ENCODE measurements at regions of chr10 and their contacts with region 1.

Region 1: DNA sequence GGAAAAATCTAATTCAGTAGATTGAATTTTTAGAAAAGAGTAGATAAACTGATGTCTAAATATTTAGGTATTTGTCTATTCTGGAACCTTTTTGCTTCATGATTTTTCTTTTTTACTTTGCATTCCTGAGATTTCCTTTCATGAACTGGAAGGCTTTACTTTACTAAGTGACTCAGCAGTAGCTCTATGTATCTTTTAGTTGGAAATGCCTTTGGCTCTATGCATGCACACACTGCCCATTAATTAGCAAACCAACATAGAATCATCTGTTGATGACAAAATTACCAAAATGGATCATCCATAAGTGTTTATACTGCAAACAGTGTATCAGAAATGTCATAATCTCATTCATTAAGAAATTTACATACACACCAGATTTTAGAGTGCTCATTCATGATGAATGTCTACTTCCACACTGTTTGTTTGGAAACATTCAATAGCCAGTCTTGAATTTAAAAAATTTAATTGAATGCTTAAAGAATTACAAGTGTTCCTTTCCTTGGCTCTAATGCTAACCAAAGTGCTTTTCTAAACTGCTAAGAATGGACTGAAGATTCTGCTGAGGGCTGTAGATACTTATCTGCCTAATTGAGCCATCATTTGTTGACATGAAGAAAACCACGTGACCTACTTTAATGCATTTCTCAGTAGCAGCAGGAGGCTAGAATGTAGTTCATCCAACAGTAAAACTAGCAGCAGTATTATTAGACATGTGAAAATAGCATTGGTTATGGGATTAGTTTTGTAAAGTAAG is 282.0 kb downstream of the ADK start:
- DNase-seq: no peak
- ATAC-seq: no peak
- H3K4me3 Mint-ChIP-seq: no peak overlapping the region
- H3K27ac Mint-ChIP-seq: peak overlapping the region; percentile 51; the same call in 1 of the 2 replicates
- H3K4me1 Mint-ChIP-seq: peaks cover 32% of the 10 kb centered on the region
- H3K27me3 Mint-ChIP-seq: no peaks in the 10 kb centered on the region
- CTCF ChIP-seq: no peak

Region 2: DNA sequence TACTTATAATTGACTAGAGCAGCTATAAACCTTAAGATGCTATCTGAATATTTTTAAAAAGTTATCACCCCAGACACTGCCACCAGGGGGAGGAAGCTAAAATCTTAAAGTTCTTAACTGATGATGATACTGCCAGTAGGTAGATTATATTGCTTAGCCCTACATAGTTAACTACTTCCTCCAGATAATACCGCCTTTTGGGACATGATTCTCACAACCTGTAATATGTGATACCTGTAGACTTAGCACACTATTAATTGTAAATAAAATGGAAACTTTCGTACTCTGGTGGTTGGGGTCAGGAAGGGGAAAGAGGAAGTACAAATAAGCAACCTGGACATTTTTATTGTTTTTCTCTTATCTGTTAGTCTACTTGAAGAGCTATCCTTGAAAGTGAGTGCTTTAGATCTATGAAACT is 13.1 kb before region 1 on chr10:
- CTCF ChIA-PET with region 1: interaction called, 10 read pairs
- POLR2A ChIA-PET with region 1: no interaction called
- DNase-seq: no peak
- ATAC-seq: peak; percentile 50
- H3K4me3 Mint-ChIP-seq: no peak overlapping the region; the same call in 1 of the 2 replicates
- H3K27ac Mint-ChIP-seq: peak overlapping the region; percentile 15; the same call in 1 of the 2 replicates
- H3K4me1 Mint-ChIP-seq: peaks cover 53% of the 10 kb centered on the region
- H3K27me3 Mint-ChIP-seq: no peaks in the 10 kb centered on the region
- CTCF ChIP-seq: peak; percentile 43